PC-9 (cell line): ENCODE measurements at regions of chr2 and their contacts with region 1.

Region 1: GRCh38 chr2:118046634-118047210 is 32.9 kb upstream of the CCDC93 start:
- DNase-seq: peak in 1 of 2 experiments; percentile 62
- H3K4me3 ChIP-seq: no peak overlapping the region
- H3K27ac ChIP-seq: peak overlapping the region; percentile 71
- H3K4me1 ChIP-seq: peaks cover 52% of the 10 kb centered on the region
- H3K27me3 ChIP-seq: no peaks in the 10 kb centered on the region
- CTCF ChIP-seq: peak; percentile 88

Region 2: GRCh38 chr2:118078749-118079148 is 32.0 kb after region 1 on chr2:
- CTCF ChIA-PET with region 1: interaction called, 12 read pairs
- POLR2A ChIA-PET with region 1: no interaction called
- intact Hi-C with region 1: loop called (anchors 2 kb)
- DNase-seq: peak; percentile 46 to 100
- H3K4me3 ChIP-seq: peak overlapping the region; percentile 30; the same call in 1 of the 2 replicates
- H3K27ac ChIP-seq: peak overlapping the region; percentile 95
- H3K4me1 ChIP-seq: peaks cover 62% of the 10 kb centered on the region
- H3K27me3 ChIP-seq: no peaks in the 10 kb centered on the region
- CTCF ChIP-seq: no peak

Region 3: GRCh38 chr2:118112771-118113334 is 66.1 kb after region 1 on chr2:
- CTCF ChIA-PET with region 1: no interaction called
- POLR2A ChIA-PET with region 1: no interaction called
- intact Hi-C with region 1: loop called (anchors 2 kb)
- DNase-seq: peak; percentile 67 to 100
- H3K4me3 ChIP-seq: 0 out of 2 replicates have a peak overlapping the region, but pooled peaks have one; percentile 4
- H3K27ac ChIP-seq: peak overlapping the region; percentile 99
- H3K4me1 ChIP-seq: peaks cover 45% of the 10 kb centered on the region
- H3K27me3 ChIP-seq: no peaks in the 10 kb centered on the region
- CTCF ChIP-seq: no peak

Region 4: GRCh38 chr2:118169359-118170007 is 122.8 kb after region 1 on chr2:
- CTCF ChIA-PET with region 1: interaction called, 5 read pairs
- POLR2A ChIA-PET with region 1: no interaction called
- intact Hi-C with region 1: loop called (anchors 5 kb)
- DNase-seq: peak; percentile 43 to 51
- H3K4me3 ChIP-seq: no peak overlapping the region
- H3K27ac ChIP-seq: no peak overlapping the region
- H3K4me1 ChIP-seq: peaks cover 15% of the 10 kb centered on the region
- H3K27me3 ChIP-seq: no peaks in the 10 kb centered on the region
- CTCF ChIP-seq: no peak

Region 5: DNA sequence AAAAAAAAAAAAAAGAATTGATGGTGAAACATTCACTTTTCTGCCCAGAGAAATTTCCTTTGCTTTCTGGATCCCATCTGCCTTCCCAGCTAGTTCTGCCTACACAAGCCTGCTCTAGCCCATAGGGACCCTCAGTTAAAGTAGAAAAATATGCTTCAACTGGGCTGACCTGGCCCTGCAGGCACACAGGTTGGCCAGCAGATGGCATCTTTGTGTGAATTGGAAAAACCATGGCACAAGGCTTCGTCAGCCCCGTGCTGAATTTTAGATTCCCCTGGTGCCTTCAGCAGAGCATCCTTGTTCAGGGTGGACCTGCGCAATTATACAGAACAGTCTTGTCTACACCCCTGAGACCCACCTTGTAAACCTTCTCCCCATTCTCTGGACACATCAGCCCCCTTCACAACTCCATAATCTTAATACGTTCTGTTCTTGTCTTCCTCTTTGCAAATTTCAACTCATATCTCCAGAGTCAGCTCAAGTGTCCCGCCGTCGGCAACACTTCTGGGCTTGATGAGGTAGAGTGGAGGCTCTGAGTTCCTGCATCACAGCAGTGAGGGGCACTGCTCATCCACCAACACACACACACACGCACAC is 156.1 kb after region 1 on chr2:
- CTCF ChIA-PET with region 1: no interaction called
- POLR2A ChIA-PET with region 1: interaction called, 3 read pairs
- intact Hi-C with region 1: loop called (anchors 5 kb)
- DNase-seq: peak in 1 of 2 experiments; percentile 34
- H3K4me3 ChIP-seq: no peak overlapping the region
- H3K27ac ChIP-seq: no peak overlapping the region
- H3K4me1 ChIP-seq: no peaks in the 10 kb centered on the region
- H3K27me3 ChIP-seq: no peaks in the 10 kb centered on the region
- CTCF ChIP-seq: peak; percentile 91

Region 6: GRCh38 chr2:118269408-118270051 is 222.8 kb after region 1 on chr2:
- CTCF ChIA-PET with region 1: interaction called, 3 read pairs
- POLR2A ChIA-PET with region 1: no interaction called
- intact Hi-C with region 1: loop called (anchors 1 kb)
- DNase-seq: peak in 1 of 2 experiments; percentile 16
- H3K4me3 ChIP-seq: no peak overlapping the region
- H3K27ac ChIP-seq: no peak overlapping the region
- H3K4me1 ChIP-seq: no peaks in the 10 kb centered on the region
- H3K27me3 ChIP-seq: no peaks in the 10 kb centered on the region
- CTCF ChIP-seq: peak; percentile 63